ENCODE measurements at regions of chr4 and their contacts with region 1.

Region 1: GRCh38 chr4:124111922-124112321 is 600.6 kb downstream of the ANKRD50 start:
- DNase-seq: peak; percentile 87
- ATAC-seq: peak; percentile 88
- H3K4me3 ChIP-seq: no peak overlapping the region
- H3K27ac ChIP-seq: no peak overlapping the region
- H3K4me1 ChIP-seq: no peaks in the 10 kb centered on the region; the same call in 1 of the 2 replicates
- H3K27me3 ChIP-seq: no peaks in the 10 kb centered on the region
- CTCF ChIP-seq: peak; percentile 82
- POLR2A ChIP-seq: no peak
- RAD21 ChIP-seq: peak; percentile 92

Region 2: DNA sequence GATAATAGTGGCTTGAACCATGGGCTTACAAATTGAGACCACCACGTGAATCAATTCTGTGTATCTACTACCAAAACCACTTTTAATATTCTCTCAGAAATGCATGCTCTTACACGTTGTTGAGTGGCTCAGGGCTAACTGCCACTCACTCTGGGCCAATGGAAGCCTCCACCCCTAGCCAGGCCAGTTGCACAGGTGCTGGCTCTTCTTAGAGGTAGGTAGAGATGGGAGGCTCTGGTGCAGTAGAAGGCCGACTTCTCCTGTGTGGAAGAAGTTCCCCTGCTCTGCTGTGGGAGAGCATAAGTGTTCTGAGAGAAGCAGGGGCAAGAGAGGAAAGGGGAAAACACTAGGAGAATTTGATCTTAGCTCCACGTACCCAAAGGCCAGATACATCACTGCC is 1404.4 kb before region 1 on chr4:
- CTCF ChIA-PET with region 1: interaction called, 10 read pairs
- POLR2A ChIA-PET with region 1: no interaction called
- dilution Hi-C with region 1: no loop called
- in situ Hi-C with region 1: no loop called
- intact Hi-C with region 1: no loop called
- DNase-seq: no peak
- ATAC-seq: no peak
- H3K4me3 ChIP-seq: no peak overlapping the region
- H3K27ac ChIP-seq: no peak overlapping the region
- H3K4me1 ChIP-seq: no peaks in the 10 kb centered on the region
- H3K27me3 ChIP-seq: no peaks in the 10 kb centered on the region
- CTCF ChIP-seq: no peak
- POLR2A ChIP-seq: no peak
- RAD21 ChIP-seq: no peak

Region 3: GRCh38 chr4:123102897-123103471 is 1008.9 kb before region 1 on chr4:
- CTCF ChIA-PET with region 1: no interaction called
- POLR2A ChIA-PET with region 1: no interaction called
- dilution Hi-C with region 1: no loop called
- in situ Hi-C with region 1: no loop called
- intact Hi-C with region 1: loop called (anchors 1 kb)
- DNase-seq: peak; percentile 69
- ATAC-seq: peak; percentile 89
- H3K4me3 ChIP-seq: no peak overlapping the region
- H3K27ac ChIP-seq: no peak overlapping the region
- H3K4me1 ChIP-seq: no peaks in the 10 kb centered on the region
- H3K27me3 ChIP-seq: no peaks in the 10 kb centered on the region
- CTCF ChIP-seq: peak; percentile 71
- POLR2A ChIP-seq: no peak
- RAD21 ChIP-seq: peak; percentile 81

Region 4: DNA sequence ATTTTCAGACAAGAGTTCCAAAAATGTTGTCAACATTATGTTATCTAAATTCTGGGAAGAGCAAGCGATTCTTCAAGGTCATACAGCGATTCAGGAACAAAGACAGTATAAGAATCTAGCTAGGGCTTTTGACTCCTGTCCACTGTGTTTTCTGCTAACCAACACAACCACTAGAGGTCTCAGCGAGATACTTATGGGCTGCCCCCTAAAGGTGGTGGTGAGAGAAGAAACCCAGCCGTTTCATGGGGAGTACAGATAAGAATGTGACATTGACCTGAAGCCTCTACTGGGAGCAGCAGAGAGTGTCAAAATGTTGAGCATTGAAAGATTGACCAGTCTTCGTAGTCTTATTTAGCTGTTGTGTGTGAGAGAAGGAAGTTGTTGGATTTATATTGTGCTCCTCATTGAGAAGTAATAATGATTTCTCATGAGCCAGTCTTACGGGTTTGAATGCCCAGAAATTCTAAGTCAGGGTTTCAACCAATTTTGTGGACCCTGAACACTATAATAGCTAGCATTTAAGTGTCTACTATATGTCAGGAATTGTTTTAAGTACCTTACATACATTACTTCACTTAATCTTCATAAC is 547.1 kb before region 1 on chr4:
- CTCF ChIA-PET with region 1: no interaction called
- POLR2A ChIA-PET with region 1: no interaction called
- dilution Hi-C with region 1: no loop called
- in situ Hi-C with region 1: no loop called
- intact Hi-C with region 1: loop called (anchors 5 kb)
- DNase-seq: peak; percentile 69
- ATAC-seq: peak; percentile 77; the same call in 1 of the 2 replicates
- H3K4me3 ChIP-seq: no peak overlapping the region
- H3K27ac ChIP-seq: no peak overlapping the region
- H3K4me1 ChIP-seq: peaks cover 10% of the 10 kb centered on the region
- H3K27me3 ChIP-seq: no peaks in the 10 kb centered on the region
- CTCF ChIP-seq: peak; percentile 95
- POLR2A ChIP-seq: no peak
- RAD21 ChIP-seq: peak; percentile 68

Region 5: GRCh38 chr4:123776254-123776653 is 335.7 kb before region 1 on chr4:
- CTCF ChIA-PET with region 1: no interaction called
- POLR2A ChIA-PET with region 1: no interaction called
- dilution Hi-C with region 1: no loop called
- in situ Hi-C with region 1: no loop called
- intact Hi-C with region 1: loop called (anchors 2 kb)
- DNase-seq: no peak
- ATAC-seq: no peak
- H3K4me3 ChIP-seq: no peak overlapping the region
- H3K27ac ChIP-seq: no peak overlapping the region
- H3K4me1 ChIP-seq: peaks cover 4% of the 10 kb centered on the region; the same call in 1 of the 2 replicates
- H3K27me3 ChIP-seq: no peaks in the 10 kb centered on the region
- CTCF ChIP-seq: no peak
- POLR2A ChIP-seq: no peak
- RAD21 ChIP-seq: no peak

Region 6: DNA sequence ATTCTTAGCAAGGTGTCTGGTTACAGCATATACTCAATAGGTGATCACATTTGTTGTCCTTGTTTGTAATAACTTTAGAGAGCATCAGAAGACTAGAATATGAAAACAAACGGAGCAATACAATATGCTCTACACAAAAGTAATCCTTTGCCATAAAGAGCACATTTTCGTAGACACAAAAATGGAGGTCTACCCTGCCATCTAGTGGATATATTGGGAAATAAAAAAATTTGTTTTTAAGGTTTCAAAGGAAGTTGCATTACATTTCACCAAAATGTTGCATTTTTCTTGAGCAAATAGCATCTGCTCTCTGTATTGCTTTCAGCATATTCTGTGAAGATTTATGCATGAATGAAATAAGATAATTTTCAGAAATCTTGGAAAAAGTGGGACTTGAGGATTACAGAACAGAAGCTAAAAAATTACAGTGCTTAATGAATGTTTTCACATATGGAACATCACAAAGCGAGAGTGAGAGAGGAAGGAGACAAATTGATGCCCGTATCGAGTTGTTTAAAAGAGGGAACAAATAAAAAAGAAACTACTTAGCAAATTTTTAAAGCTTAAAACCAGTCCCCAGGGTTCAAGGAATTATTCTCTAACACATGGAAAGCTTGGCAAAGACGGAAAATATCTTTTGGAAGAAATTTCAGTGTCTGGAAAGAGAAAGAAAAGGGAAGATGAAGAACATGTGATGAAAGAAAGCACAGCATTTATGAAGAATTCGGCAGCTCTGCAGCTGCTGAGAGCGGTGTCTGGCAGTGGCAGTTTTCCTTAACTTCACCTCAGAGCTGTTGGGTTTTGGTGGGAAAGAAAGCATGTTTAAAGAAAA is 210.5 kb after region 1 on chr4:
- CTCF ChIA-PET with region 1: no interaction called
- POLR2A ChIA-PET with region 1: no interaction called
- dilution Hi-C with region 1: no loop called
- in situ Hi-C with region 1: no loop called
- intact Hi-C with region 1: loop called (anchors 2 kb)
- DNase-seq: peak; percentile 49
- ATAC-seq: peak; percentile 71
- H3K4me3 ChIP-seq: no peak overlapping the region
- H3K27ac ChIP-seq: no peak overlapping the region
- H3K4me1 ChIP-seq: no peaks in the 10 kb centered on the region
- H3K27me3 ChIP-seq: no peaks in the 10 kb centered on the region
- CTCF ChIP-seq: peak; percentile 61
- POLR2A ChIP-seq: no peak
- RAD21 ChIP-seq: peak; percentile 63

Measured in IMR-90 (cell line).